Activated CD4-positive, alpha-beta memory T cell treated with anti-CD3 and anti-CD28 coated beads for 36 hours (primary cell): ENCODE measurements at regions of chr6 and their contacts with region 1.

Region 1: DNA sequence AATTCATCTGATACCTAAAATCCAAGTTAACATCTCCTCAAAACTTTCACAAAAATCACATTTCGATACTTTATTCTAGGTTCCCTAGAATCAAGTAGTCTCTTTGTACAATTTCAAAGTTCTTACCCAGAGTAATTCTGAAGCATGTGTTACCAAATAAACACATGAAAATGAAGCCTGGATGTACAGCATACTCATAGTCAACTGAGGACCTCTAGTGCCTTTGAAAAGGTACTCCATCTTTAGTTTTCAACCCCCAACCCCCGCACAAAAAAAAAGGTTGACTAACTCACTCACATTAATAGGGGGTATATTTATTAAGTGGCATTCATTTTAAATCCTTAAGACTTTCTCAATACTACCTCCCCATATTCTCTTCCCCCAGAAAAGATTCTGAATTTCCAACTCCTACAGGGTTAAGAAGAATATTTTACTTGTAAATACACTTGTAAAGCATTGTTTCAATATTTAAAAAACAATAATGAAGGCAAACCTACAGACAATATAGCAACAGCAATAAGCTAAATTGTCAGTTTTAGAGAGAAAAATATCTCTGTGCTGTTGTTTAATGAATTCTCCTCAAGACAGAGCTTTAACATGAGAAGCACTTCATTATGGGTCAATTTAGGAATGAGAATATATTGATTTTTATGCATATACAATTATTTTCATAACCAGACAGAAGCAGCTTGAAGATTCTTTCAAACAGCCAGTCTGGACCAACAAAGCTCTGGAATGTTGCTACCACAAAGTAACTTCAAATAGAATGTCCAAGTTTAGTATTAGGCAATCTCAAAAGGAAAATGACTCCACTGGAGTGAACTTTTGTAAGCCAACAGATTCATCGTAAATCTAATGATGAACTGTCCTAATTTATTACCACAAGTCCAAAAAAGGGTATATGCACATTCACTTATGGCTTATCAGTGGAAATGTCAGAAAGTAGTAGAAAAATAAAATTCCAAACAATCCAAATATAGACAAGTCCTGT is 3.3 kb downstream of the PLN start:
- DNase-seq: no peak
- H3K4me3 Mint-ChIP-seq: no peak overlapping the region
- H3K27ac Mint-ChIP-seq: no peak overlapping the region
- H3K4me1 Mint-ChIP-seq: peaks cover 27% of the 10 kb centered on the region
- H3K27me3 Mint-ChIP-seq: no peaks in the 10 kb centered on the region

Region 2: GRCh38 chr6:117976030-117976651 is 575.2 kb before region 1 on chr6:
- CTCF ChIA-PET with region 1: interaction called, 4 read pairs
- POLR2A ChIA-PET with region 1: no interaction called
- intact Hi-C with region 1: loop called (anchors 1 kb)
- DNase-seq: no peak
- H3K4me3 Mint-ChIP-seq: no peak overlapping the region
- H3K27ac Mint-ChIP-seq: no peak overlapping the region
- H3K4me1 Mint-ChIP-seq: no peaks in the 10 kb centered on the region
- H3K27me3 Mint-ChIP-seq: peaks cover 7% of the 10 kb centered on the region

Region 3: DNA sequence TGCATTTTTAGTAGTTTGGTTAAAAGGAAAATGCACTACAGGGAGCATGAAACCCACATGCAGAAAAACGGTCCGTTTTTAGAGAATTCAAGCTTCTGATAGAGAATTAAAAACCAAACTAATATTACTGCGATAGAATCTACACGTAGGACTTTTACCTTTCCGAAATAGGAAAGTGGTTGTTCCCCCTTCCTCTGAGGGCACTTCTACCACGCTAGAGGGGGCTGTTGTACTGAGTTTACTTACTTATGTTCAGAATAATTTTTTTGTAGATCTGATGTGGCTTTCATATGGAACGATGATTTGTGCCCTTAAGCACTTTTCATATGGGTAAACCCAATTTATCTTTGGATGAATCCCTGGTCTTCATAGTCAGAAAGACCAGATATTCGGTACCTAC is 267.6 kb before region 1 on chr6:
- CTCF ChIA-PET with region 1: interaction called, 5 read pairs
- POLR2A ChIA-PET with region 1: no interaction called
- intact Hi-C with region 1: loop called (anchors 1 kb)
- DNase-seq: peak; percentile 39
- H3K4me3 Mint-ChIP-seq: no peak overlapping the region
- H3K27ac Mint-ChIP-seq: no peak overlapping the region
- H3K4me1 Mint-ChIP-seq: no peaks in the 10 kb centered on the region
- H3K27me3 Mint-ChIP-seq: no peaks in the 10 kb centered on the region